CD4-positive, alpha-beta memory T cell (primary cell): ENCODE measurements at regions of chr14 and their contacts with region 1.

Region 1: GRCh38 chr14:99271951-99272631 is at the start of gene BCL11B:
- DNase-seq: peak; percentile 87 to 96 (median 91)
- H3K4me3 ChIP-seq: peak within 1 kb of the TSS; percentile 91 to 93
- H3K4me3 Mint-ChIP-seq: peak within 1 kb of the TSS; percentile 92 to 100 (median 98)
- H3K27ac ChIP-seq: peak within 1 kb of the TSS; percentile 80
- H3K27ac Mint-ChIP-seq: peak within 1 kb of the TSS; percentile 95 to 99 (median 96)
- H3K4me1 ChIP-seq: peaks cover 21% of the 10 kb centered on the region
- H3K4me1 Mint-ChIP-seq: peaks cover 12 to 53% (median 27%) of the 10 kb centered on the region in 4 donors
- H3K27me3 ChIP-seq: no peaks in the 10 kb centered on the region
- H3K27me3 Mint-ChIP-seq: no peaks in the 10 kb centered on the region
- total RNA-seq, gene BCL11B: 163 to 165 TPM

Region 2: DNA sequence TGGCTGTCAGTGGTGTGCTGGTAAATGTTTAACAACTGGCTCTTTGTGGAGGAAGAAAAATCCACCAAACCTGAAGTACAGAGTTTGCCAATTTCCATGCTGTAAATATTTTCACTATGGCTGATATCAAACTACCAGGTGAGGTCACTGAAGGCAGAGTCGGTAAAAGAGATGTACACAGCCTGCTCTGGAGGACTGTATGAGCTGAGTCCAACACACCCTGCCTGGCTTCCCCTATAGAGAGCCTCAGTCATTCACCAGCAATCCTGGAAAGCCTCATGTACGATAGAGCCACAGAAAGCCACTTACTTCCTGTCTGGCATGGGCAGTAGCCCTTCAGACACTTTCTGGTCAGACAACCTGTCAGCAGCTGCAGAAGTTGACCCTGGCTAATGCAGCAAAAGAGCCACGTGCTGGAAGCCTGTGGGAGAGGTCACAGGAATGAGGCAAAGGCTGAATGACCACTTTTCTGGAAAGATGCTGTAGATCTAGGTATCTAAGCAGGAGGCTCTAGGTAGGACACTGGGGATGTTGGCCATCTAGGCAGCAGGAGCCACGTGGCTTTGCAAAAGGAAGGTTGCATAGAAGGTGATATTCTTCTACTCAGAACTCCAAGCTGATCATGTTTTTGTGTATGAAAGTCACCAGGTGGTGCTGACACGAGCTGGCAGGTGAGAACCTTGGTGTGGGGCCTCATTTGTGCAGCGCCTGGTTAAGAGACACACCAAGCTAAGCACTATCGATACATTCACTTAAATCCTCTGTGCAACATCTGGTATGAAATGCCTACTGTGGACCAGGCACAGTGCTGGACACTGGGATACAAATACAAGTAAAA is 1921.0 kb before region 1 on chr14:
- CTCF ChIA-PET with region 1: no interaction called
- POLR2A ChIA-PET with region 1: no interaction called
- intact Hi-C with region 1: loop called (anchors 5 kb)
- DNase-seq: no peak
- H3K4me3 ChIP-seq: no peak overlapping the region
- H3K4me3 Mint-ChIP-seq: no peak overlapping the region
- H3K27ac ChIP-seq: no peak overlapping the region
- H3K27ac Mint-ChIP-seq: peak overlapping the region in 2 of 7 donors; percentile 31 to 37
- H3K4me1 ChIP-seq: no peaks in the 10 kb centered on the region
- H3K4me1 Mint-ChIP-seq: peaks cover 16 to 20% (median 18%) of the 10 kb centered on the region in 4 donors
- H3K27me3 ChIP-seq: no peaks in the 10 kb centered on the region
- H3K27me3 Mint-ChIP-seq: no peaks in the 10 kb centered on the region

Region 3: DNA sequence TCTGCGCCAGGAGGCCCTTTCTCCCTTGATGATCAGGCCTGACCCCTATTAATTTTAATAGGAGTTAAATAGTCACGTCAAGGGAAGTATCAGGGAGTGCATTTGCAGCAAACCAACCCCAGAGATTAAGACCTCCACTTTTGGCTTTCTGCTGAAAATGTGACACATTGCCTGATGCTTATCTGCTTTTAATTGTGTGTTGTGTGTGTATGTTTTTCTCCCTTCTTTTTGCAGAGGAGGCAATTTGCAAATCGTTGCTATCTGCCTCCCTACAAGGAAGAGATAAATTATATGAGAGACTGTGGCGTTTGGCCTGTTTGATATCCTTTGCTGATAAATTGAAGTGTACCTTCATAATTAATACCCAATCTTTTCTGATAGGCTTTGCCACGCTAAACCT is 1652.0 kb before region 1 on chr14:
- CTCF ChIA-PET with region 1: no interaction called
- POLR2A ChIA-PET with region 1: no interaction called
- intact Hi-C with region 1: loop called (anchors 5 kb)
- DNase-seq: peak in 1 of 5 donors; percentile 33
- H3K4me3 ChIP-seq: peak overlapping the region in 1 of 2 donors; percentile 26
- H3K4me3 Mint-ChIP-seq: peak overlapping the region; percentile 60 to 94 (median 85)
- H3K27ac ChIP-seq: peak overlapping the region; percentile 73
- H3K27ac Mint-ChIP-seq: peak overlapping the region; percentile 89 to 99 (median 97)
- H3K4me1 ChIP-seq: peaks cover 45% of the 10 kb centered on the region
- H3K4me1 Mint-ChIP-seq: peaks cover 44 to 67% (median 47%) of the 10 kb centered on the region in 4 donors
- H3K27me3 ChIP-seq: no peaks in the 10 kb centered on the region
- H3K27me3 Mint-ChIP-seq: no peaks in the 10 kb centered on the region

Region 4: DNA sequence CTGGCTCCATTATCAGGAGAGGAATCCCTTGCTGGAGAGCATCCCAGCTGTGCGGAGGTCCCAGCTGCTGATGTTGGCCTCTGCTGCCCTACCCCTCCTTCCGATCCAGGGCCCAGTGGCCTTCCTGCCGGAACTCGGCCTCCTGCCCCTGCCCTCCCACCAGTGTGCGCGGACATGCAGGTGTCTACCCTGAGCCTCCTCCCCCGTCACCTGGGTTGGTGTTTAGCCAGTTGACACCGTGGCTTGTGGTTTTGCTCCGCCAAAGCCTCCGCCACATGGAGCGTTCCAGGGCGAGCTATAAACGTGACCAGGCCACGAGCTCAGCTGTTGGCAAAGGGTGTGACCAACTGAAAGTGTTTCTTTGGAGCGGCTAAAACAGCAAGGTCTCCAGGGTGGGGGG is 1104.4 kb before region 1 on chr14:
- CTCF ChIA-PET with region 1: interaction called, 14 read pairs
- POLR2A ChIA-PET with region 1: interaction called, 20 read pairs
- intact Hi-C with region 1: no loop called
- DNase-seq: peak in 2 of 5 donors; percentile 22 to 54
- H3K4me3 ChIP-seq: peak overlapping the region in 1 of 2 donors; percentile 15
- H3K4me3 Mint-ChIP-seq: peak overlapping the region in 7 of 8 donors; percentile 60 to 90 (median 71)
- H3K27ac ChIP-seq: peak overlapping the region; percentile 45
- H3K27ac Mint-ChIP-seq: peak overlapping the region; percentile 79 to 99 (median 90)
- H3K4me1 ChIP-seq: peaks cover 63% of the 10 kb centered on the region
- H3K4me1 Mint-ChIP-seq: peaks cover 53 to 82% (median 68%) of the 10 kb centered on the region in 4 donors
- H3K27me3 ChIP-seq: no peaks in the 10 kb centered on the region
- H3K27me3 Mint-ChIP-seq: no peaks in the 10 kb centered on the region

Region 5: DNA sequence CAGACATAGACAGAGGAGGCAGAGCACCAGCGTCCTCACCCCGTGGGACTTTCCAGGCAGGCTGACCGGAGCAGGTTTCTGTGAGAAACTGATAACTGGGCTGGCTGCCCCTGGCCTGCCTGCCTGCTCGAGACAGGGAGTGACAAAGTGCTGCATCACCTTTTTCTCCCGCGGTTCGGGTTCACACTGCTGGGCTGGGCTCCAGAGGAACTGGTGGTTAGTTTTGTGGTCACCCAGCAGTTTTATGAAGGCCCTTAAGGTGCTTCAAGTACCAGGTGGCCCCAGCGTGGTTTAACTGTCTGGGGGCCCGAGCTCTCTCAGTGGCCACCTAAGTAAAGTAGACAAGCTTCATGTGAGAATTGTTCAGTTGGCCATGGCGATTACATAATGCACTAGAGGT is 1073.7 kb before region 1 on chr14:
- CTCF ChIA-PET with region 1: interaction called, 4 read pairs
- POLR2A ChIA-PET with region 1: interaction called, 320 read pairs
- intact Hi-C with region 1: no loop called
- DNase-seq: peak in 4 of 5 donors; percentile 46 to 68 (median 48)
- H3K4me3 ChIP-seq: peak overlapping the region in 1 of 2 donors; percentile 12
- H3K4me3 Mint-ChIP-seq: peak overlapping the region in 7 of 8 donors; percentile 45 to 81 (median 72)
- H3K27ac ChIP-seq: peak overlapping the region; percentile 12
- H3K27ac Mint-ChIP-seq: peak overlapping the region; percentile 78 to 88 (median 84)
- H3K4me1 ChIP-seq: peaks cover 81% of the 10 kb centered on the region
- H3K4me1 Mint-ChIP-seq: peaks cover 67 to 94% (median 75%) of the 10 kb centered on the region in 4 donors
- H3K27me3 ChIP-seq: no peaks in the 10 kb centered on the region
- H3K27me3 Mint-ChIP-seq: no peaks in the 10 kb centered on the region

Region 6: DNA sequence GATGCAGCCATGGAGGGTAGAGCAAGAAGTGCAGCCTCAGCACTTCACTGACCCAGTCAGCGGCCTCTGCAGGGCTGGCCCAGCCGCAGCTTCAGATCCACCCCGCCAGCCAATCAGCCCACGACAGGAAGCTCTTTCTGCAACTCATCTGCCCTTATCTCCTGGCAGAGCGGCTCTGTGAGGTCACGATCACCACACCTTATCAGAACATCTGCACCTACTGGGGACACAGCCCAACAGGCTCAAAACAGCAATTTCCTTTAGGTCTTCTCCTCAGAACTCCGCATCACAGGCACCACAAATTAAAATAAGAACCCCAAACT is 287.4 kb before region 1 on chr14:
- CTCF ChIA-PET with region 1: interaction called, 4 read pairs
- POLR2A ChIA-PET with region 1: interaction called, 19 read pairs
- intact Hi-C with region 1: loop called (anchors 2 kb)
- DNase-seq: peak; percentile 81 to 87 (median 87)
- H3K4me3 ChIP-seq: peak overlapping the region in 1 of 2 donors; percentile 16
- H3K4me3 Mint-ChIP-seq: peak overlapping the region; percentile 42 to 93 (median 81)
- H3K27ac ChIP-seq: peak overlapping the region; percentile 47
- H3K27ac Mint-ChIP-seq: peak overlapping the region; percentile 92 to 99 (median 97)
- H3K4me1 ChIP-seq: peaks cover 37% of the 10 kb centered on the region
- H3K4me1 Mint-ChIP-seq: peaks cover 32 to 69% (median 53%) of the 10 kb centered on the region in 4 donors
- H3K27me3 ChIP-seq: no peaks in the 10 kb centered on the region
- H3K27me3 Mint-ChIP-seq: no peaks in the 10 kb centered on the region

Region 7: DNA sequence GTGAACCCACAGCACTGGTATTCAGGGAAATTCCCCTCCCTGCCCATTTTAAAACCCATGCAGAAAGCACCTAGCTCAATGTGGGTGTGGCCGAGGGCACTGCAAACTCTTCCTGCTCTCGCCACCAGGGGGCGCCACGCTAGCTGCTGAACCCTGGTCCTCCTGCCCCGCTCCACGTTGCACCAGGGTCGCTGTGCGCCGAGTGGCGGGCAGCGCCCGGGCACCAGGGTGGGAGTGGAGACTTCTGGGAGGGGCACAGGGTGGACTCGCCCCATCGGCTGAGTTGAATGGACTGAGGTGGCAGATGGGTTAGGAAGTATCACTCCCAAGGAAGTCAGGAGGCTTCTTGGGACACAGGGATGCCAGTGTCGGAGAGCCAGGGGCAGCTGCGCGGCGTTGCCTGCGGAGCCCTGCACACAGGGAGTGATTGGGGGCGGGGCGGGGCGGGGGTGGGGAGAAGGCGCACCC is 48.0 kb after region 1 on chr14:
- CTCF ChIA-PET with region 1: no interaction called
- POLR2A ChIA-PET with region 1: no interaction called
- intact Hi-C with region 1: no loop called
- DNase-seq: peak; percentile 57 to 72 (median 61)
- H3K4me3 ChIP-seq: no peak overlapping the region
- H3K4me3 Mint-ChIP-seq: no peak overlapping the region
- H3K27ac ChIP-seq: no peak overlapping the region
- H3K27ac Mint-ChIP-seq: no peak overlapping the region
- H3K4me1 ChIP-seq: peaks cover 5% of the 10 kb centered on the region
- H3K4me1 Mint-ChIP-seq: peaks cover 0 to 14% (median 3%) of the 10 kb centered on the region in 4 donors
- H3K27me3 ChIP-seq: no peaks in the 10 kb centered on the region
- H3K27me3 Mint-ChIP-seq: peaks cover under 1% of the 10 kb centered on the region in 2 donors